SK-N-SH (cell line): ENCODE measurements at regions of chr21 and their contacts with region 1.

Region 1: DNA sequence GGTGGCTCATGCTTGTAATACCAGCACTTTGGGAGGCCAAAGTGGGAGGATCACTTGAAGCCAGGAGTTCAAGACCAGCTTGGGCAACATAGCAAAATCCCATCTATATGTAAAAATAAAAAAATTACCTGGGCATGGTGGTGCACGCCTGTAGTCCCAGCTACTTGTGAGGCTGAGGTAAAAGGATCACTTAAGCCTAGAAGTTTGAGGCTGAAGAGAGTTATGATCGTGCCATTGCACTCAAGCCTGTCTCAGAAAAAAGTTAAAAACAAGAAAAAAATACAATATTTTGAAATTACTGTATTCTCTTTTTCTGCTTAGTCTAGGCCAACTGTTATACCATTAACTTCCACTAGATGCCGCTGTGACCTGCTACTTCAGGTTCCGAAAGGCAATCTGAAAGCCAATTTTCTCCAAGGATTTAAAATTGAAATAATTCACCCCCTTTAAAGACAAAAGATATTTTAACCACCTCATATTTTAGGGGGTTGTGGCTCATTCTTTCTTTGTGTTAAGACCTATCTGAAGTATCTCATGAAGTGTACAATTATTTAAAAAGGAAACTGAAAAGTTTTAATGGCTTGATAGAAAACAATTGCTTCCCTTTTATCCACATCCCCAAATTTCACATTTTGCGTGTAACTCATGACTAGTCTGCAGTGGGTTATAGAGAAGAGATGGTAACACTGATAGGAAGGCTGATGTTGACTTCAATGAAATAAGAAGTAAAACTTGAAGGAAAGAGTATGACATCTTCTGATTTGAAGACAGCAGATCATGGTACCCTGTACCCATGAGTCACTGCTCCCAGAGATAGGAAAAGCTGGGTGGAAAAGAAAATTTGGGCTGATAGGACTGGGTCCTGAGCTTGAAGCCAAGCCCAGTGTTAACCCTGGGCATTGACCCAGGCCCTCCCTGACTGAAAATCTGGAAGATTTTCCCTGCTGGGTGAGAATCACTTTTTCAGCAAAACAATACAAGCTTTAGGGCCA is 24.4 kb upstream of the CLDN14 start:
- DNase-seq: peak; percentile 35
- H3K4me3 ChIP-seq: peak overlapping the region in 1 of 2 experiments; percentile 20; a peak in 1 of 4 replicates
- H3K27ac ChIP-seq: no peak overlapping the region
- H3K4me1 ChIP-seq: no peaks in the 10 kb centered on the region
- H3K27me3 ChIP-seq: no peaks in the 10 kb centered on the region
- CTCF ChIP-seq: peak; percentile 93
- EP300 ChIP-seq: no peak
- RAD21 ChIP-seq: peak; percentile 87

Region 2: GRCh38 chr21:36381841-36382589 is 122.3 kb before region 1 on chr21:
- CTCF ChIA-PET with region 1: no interaction called
- POLR2A ChIA-PET with region 1: no interaction called
- DNase-seq: no peak
- H3K4me3 ChIP-seq: no peak overlapping the region
- H3K27ac ChIP-seq: no peak overlapping the region
- H3K4me1 ChIP-seq: peaks cover 0 to 4% of the 10 kb centered on the region in 2 experiments; a peak in 2 of 4 replicates
- H3K27me3 ChIP-seq: no peaks in the 10 kb centered on the region
- CTCF ChIP-seq: no peak
- EP300 ChIP-seq: no peak
- RAD21 ChIP-seq: no peak

Region 3: DNA sequence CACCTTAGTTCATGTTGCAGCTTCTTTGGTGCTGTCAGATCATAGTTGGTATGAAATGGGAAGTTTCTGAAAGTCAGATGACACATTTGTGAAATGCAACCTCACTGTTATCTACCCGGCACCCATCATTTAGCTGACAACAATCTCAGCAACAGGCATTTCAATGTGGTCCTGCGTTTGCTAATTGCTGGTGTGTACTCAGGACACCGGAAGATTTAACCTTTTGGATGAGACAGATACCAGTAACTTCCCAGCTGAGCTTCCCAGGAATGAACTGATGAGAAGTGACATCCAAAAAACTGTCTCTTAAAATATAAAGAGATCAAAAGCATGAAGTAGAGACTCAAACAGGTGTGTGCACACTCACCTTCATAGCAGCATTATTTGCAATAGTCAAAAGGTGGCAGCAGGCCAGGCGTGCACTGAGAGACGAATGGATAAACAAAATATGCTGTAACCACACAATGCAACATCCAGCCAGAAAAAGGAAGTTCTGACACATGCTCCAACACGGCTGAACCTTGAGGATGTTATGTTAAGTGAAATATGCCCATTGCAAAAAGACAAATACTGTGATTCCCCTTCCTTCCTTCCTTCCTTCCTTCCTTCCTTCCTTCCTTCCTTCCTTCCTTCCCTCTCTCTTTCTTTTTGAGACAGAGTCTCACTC is 16.6 kb before region 1 on chr21:
- CTCF ChIA-PET with region 1: interaction called, 28 read pairs
- POLR2A ChIA-PET with region 1: no interaction called
- DNase-seq: no peak
- H3K4me3 ChIP-seq: no peak overlapping the region
- H3K27ac ChIP-seq: no peak overlapping the region
- H3K4me1 ChIP-seq: peaks cover 0 to 5% of the 10 kb centered on the region in 2 experiments; a peak in 1 of 4 replicates
- H3K27me3 ChIP-seq: no peaks in the 10 kb centered on the region
- CTCF ChIP-seq: no peak
- EP300 ChIP-seq: no peak
- RAD21 ChIP-seq: no peak

Region 4: DNA sequence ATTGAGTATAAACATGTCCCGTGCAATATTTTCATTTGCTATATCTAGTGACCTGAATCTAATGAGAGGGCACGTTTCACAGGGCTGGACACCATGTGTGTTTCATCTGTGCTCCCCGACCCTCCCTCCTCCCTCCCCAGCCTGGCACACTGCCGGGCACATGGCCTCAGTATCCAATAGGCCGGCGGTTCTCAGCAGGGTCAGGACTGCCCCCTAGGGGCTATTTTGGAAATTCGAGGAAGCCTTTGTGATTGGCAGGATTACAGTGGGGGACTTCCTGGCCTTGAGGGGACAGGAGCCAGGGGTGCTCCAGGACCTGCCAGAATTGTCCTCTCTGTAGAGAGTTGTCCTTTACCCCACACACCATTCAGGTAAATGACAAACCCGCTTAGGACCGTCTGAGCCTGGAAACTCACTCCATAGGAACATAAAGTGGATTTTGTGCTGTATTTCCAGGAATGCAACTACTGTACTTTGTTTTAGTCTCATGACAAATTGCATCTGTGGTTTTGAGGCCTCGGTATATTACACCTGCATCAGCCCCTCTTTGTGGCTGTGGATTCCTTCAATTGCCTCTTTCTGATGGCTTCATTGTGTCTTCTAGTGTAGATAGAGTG is 85.1 kb after region 1 on chr21:
- CTCF ChIA-PET with region 1: interaction called, 13 read pairs
- POLR2A ChIA-PET with region 1: no interaction called
- DNase-seq: peak; percentile 68
- H3K4me3 ChIP-seq: no peak overlapping the region
- H3K27ac ChIP-seq: no peak overlapping the region
- H3K4me1 ChIP-seq: no peaks in the 10 kb centered on the region; a peak in 1 of 4 replicates
- H3K27me3 ChIP-seq: peaks cover 42% of the 10 kb centered on the region; the same call in 1 of the 2 replicates
- CTCF ChIP-seq: peak; percentile 71
- EP300 ChIP-seq: no peak
- RAD21 ChIP-seq: peak; percentile 65